PC-9 (cell line): ENCODE measurements at regions of chr18 and their contacts with region 1.

Region 1: DNA sequence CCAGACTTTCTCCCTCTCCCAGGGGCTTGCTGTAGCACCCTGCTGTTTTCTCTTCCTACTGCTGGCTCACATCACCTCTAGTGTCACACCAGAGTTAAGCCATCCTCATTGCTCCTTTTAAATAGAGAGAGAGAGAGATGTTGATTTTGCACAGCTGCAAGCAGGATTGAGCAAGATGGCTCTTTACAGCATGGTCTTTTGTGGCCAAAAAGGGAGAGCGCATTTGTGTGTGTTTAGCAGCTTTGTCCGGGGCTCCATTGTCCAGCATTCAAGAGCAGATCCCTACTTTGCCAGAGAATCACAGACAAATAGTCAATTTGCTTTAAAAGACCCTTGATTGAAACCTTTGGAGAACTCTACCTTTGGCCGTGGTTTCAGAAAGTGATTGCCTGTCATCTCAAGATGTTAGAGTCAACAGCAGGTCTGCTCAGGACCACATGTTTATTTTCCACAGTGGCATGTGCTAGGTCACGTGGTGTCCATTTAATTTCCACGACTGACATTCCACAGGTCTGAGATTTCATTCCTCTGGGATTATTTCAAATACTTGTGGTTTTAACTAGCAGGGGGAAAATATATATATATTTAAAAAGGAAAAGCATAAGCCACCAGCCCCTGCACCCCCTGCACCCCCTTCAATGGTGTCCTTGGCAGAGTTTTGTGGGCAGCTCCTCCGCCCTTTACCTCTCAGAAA is 359.9 kb upstream of the SLC14A2 start:
- DNase-seq: peak in 1 of 2 experiments; percentile 4
- H3K4me3 ChIP-seq: no peak overlapping the region
- H3K27ac ChIP-seq: no peak overlapping the region
- H3K4me1 ChIP-seq: no peaks in the 10 kb centered on the region
- H3K27me3 ChIP-seq: no peaks in the 10 kb centered on the region
- CTCF ChIP-seq: no peak

Region 2: DNA sequence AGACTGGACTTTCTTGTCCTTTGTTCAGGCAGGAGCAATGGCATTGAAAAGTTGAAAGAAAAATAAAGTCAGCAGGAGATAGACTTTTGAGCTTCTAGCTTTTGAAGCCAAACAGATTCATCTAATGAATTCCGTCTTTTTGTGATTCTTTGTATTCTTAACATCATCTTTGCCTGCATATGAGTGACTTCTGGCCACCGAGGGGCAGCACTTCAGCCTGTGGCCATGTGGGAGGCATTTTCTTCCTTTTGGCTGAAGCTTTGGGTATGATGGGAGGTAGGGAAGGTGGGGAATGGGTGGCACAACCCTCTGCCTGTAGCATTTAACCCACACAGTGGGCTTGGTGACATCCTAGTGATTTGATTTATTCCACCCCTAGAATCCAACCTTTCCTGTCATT is 354.1 kb before region 1 on chr18:
- CTCF ChIA-PET with region 1: no interaction called
- POLR2A ChIA-PET with region 1: no interaction called
- intact Hi-C with region 1: no loop called
- DNase-seq: no peak
- H3K4me3 ChIP-seq: no peak overlapping the region
- H3K27ac ChIP-seq: no peak overlapping the region
- H3K4me1 ChIP-seq: peaks cover 8% of the 10 kb centered on the region; the same call in 1 of the 2 replicates
- H3K27me3 ChIP-seq: no peaks in the 10 kb centered on the region
- CTCF ChIP-seq: no peak; the same call in 1 of the 2 replicates

Region 3: DNA sequence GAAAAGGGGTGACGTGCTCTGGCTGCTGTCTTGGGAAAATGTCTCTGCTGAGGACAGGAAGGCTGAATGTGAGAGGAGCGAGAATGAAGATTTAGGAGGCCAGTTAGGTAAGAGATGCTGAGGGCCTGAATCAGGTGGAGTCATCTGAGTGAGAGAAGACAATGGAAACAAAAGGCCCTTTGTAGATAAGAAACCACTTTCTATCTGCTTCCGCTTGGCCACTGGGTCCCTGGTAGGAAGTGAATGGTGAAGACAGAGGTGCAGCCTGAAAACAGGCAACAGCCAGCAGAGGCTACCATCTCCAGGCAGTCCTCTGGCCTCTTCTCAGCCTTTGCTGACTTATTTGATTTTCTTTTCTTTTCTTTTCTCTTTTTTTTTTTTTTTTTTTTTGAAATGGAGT is 14.1 kb before region 1 on chr18:
- CTCF ChIA-PET with region 1: no interaction called
- POLR2A ChIA-PET with region 1: no interaction called
- intact Hi-C with region 1: loop called (anchors 2 kb)
- DNase-seq: no peak
- H3K4me3 ChIP-seq: no peak overlapping the region
- H3K27ac ChIP-seq: no peak overlapping the region
- H3K4me1 ChIP-seq: no peaks in the 10 kb centered on the region
- H3K27me3 ChIP-seq: no peaks in the 10 kb centered on the region
- CTCF ChIP-seq: no peak

Region 4: DNA sequence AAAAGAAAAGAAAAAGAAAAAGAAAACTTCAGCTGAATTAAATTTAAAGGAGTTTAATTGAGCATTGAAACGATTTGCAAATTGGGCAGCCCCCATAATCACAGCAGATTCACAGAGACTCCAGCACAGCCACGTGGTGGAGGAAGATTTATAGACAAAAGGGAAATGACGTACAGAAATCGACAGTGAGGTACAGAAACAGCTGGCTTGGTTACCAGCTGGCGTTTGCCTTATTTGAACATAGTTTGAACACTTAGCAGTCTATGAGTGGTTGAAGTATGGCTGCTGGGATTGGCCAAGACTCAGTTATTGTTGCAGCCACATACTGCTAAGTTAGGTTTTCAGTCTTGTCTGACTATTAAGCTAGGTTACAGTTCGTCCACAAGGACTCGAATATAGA is 47.7 kb after region 1 on chr18:
- CTCF ChIA-PET with region 1: no interaction called
- POLR2A ChIA-PET with region 1: no interaction called
- intact Hi-C with region 1: no loop called
- DNase-seq: no peak
- H3K4me3 ChIP-seq: no peak overlapping the region
- H3K27ac ChIP-seq: no peak overlapping the region
- H3K4me1 ChIP-seq: no peaks in the 10 kb centered on the region
- H3K27me3 ChIP-seq: no peaks in the 10 kb centered on the region
- CTCF ChIP-seq: no peak